SK-N-SH (cell line): ENCODE measurements at regions of chr2 and their contacts with region 1.

Region 1: GRCh38 chr2:231297108-231297908 is 98.2 kb upstream of the B3GNT7 start:
- DNase-seq: peak; percentile 87
- H3K4me3 ChIP-seq: no peak overlapping the region; a peak in 1 of 4 replicates
- H3K27ac ChIP-seq: no peak overlapping the region; a peak in 1 of 4 replicates
- H3K4me1 ChIP-seq: no peaks in the 10 kb centered on the region; a peak in 1 of 4 replicates
- H3K27me3 ChIP-seq: no peaks in the 10 kb centered on the region
- CTCF ChIP-seq: peak; percentile 73
- EP300 ChIP-seq: no peak
- RAD21 ChIP-seq: peak; percentile 80

Region 2: GRCh38 chr2:231270221-231271114 is 26.8 kb before region 1 on chr2:
- CTCF ChIA-PET with region 1: interaction called, 11 read pairs
- POLR2A ChIA-PET with region 1: no interaction called
- DNase-seq: peak; percentile 59
- H3K4me3 ChIP-seq: no peak overlapping the region; a peak in 1 of 4 replicates
- H3K27ac ChIP-seq: peak overlapping the region in 1 of 2 experiments; percentile 94; a peak in 2 of 4 replicates
- H3K4me1 ChIP-seq: peaks cover 0 to 22% of the 10 kb centered on the region in 2 experiments; a peak in 2 of 4 replicates
- H3K27me3 ChIP-seq: no peaks in the 10 kb centered on the region
- CTCF ChIP-seq: no peak
- EP300 ChIP-seq: peak in 1 of 2 experiments; percentile 79; a peak in 2 of 4 replicates
- RAD21 ChIP-seq: peak; percentile 30; the same call in 1 of the 2 replicates

Region 3: GRCh38 chr2:231308631-231309428 is 11.5 kb after region 1 on chr2:
- CTCF ChIA-PET with region 1: interaction called, 38 read pairs
- POLR2A ChIA-PET with region 1: no interaction called
- DNase-seq: no peak
- H3K4me3 ChIP-seq: no peak overlapping the region
- H3K27ac ChIP-seq: peak overlapping the region in 1 of 2 experiments; percentile 64; a peak in 2 of 4 replicates
- H3K4me1 ChIP-seq: peaks cover 0 to 5% of the 10 kb centered on the region in 2 experiments; a peak in 1 of 4 replicates
- H3K27me3 ChIP-seq: no peaks in the 10 kb centered on the region
- CTCF ChIP-seq: no peak
- EP300 ChIP-seq: no peak
- RAD21 ChIP-seq: no peak

Region 4: DNA sequence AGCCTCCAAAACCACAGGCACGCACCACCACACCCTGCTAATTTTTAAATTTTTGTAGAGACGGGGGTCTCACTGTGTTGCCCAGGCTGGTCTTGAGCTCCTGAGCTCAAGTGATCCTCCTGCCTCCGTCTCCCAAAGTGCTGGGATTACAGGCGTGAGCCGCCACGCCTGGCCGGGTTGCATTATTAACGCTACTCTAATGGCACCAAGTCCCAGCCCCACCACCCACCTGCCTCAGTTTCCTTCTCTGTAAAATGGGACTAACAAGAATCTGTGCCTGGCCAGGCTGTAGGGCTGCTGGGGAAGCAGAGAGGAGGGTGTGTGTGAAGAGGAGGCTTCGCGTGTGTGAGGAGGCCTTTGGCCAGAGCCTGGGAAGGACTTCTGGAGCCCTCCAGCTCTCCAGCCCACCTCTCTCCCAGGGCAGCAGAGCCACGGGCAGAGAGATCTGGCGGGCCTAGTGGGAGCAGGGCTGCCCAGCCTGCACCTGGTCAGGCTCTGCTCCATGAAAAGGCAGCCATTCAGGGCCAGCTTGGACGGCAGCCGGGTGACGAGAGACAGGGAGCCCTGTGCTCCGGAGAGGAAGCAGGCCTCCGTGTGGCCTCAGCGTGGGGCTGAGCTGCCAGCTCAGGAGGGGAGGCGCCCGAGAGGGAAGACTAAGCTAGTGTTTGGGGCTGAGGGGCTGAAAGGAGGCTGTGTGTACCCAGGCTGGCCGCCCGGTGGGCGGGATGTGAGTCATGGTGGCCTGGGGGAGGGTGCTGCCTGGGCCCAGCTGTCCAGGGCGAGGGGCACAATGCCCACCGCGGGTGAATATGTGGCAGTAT is 90.8 kb after region 1 on chr2:
- CTCF ChIA-PET with region 1: interaction called, 14 read pairs
- POLR2A ChIA-PET with region 1: no interaction called
- DNase-seq: peak; percentile 70
- H3K4me3 ChIP-seq: no peak overlapping the region
- H3K27ac ChIP-seq: peak overlapping the region; percentile 16 to 32; a peak in 2 of 4 replicates
- H3K4me1 ChIP-seq: peaks cover 6 to 34% of the 10 kb centered on the region in 2 experiments; a peak in 2 of 4 replicates
- H3K27me3 ChIP-seq: no peaks in the 10 kb centered on the region
- CTCF ChIP-seq: no peak
- EP300 ChIP-seq: no peak
- RAD21 ChIP-seq: no peak; the same call in 1 of the 2 replicates

Region 5: GRCh38 chr2:231399853-231400680 is 102.8 kb after region 1 on chr2:
- CTCF ChIA-PET with region 1: interaction called, 302 read pairs
- POLR2A ChIA-PET with region 1: no interaction called
- DNase-seq: peak; percentile 88
- H3K4me3 ChIP-seq: no peak overlapping the region
- H3K27ac ChIP-seq: peak overlapping the region in 1 of 2 experiments; percentile 72; a peak in 2 of 4 replicates
- H3K4me1 ChIP-seq: peaks cover 0 to 20% of the 10 kb centered on the region in 2 experiments; a peak in 1 of 4 replicates
- H3K27me3 ChIP-seq: no peaks in the 10 kb centered on the region
- CTCF ChIP-seq: no peak
- EP300 ChIP-seq: 0 out of 4 replicates have a peak, but pooled peaks of 1 of the 2 experiments have one; percentile 6
- RAD21 ChIP-seq: peak; percentile 47